ENCODE measurements at regions of chr1 and their contacts with region 1.

Region 1: DNA sequence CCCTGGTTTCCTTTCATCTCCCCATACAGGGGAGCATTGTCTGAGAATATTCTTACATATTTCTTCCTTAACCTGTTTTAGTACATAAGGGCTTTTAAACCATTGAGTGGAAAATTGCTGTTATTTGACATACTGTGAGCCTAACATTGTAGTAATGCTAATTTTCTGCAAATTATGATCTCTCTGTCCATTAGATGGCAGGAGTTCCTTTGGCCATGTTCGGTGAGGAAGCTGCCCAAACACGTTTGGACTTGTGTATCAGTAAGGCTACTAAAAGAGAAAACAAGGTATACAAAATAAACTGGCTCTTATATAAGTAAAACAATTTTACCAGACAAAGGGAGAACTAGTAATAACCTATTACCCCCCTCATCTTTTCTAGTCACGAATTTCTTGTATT is 29.2 kb downstream of the CDC7 start:
- DNase-seq: no peak
- H3K4me3 Mint-ChIP-seq: no peak overlapping the region
- H3K27ac Mint-ChIP-seq: no peak overlapping the region
- H3K4me1 Mint-ChIP-seq: peaks cover 27% of the 10 kb centered on the region
- H3K27me3 Mint-ChIP-seq: no peaks in the 10 kb centered on the region

Region 2: GRCh38 chr1:91148641-91149069 is 381.2 kb before region 1 on chr1:
- intact Hi-C with region 1: no loop called
- DNase-seq: no peak
- H3K4me3 Mint-ChIP-seq: no peak overlapping the region
- H3K27ac Mint-ChIP-seq: no peak overlapping the region
- H3K4me1 Mint-ChIP-seq: no peaks in the 10 kb centered on the region
- H3K27me3 Mint-ChIP-seq: peaks cover 20% of the 10 kb centered on the region

Region 3: DNA sequence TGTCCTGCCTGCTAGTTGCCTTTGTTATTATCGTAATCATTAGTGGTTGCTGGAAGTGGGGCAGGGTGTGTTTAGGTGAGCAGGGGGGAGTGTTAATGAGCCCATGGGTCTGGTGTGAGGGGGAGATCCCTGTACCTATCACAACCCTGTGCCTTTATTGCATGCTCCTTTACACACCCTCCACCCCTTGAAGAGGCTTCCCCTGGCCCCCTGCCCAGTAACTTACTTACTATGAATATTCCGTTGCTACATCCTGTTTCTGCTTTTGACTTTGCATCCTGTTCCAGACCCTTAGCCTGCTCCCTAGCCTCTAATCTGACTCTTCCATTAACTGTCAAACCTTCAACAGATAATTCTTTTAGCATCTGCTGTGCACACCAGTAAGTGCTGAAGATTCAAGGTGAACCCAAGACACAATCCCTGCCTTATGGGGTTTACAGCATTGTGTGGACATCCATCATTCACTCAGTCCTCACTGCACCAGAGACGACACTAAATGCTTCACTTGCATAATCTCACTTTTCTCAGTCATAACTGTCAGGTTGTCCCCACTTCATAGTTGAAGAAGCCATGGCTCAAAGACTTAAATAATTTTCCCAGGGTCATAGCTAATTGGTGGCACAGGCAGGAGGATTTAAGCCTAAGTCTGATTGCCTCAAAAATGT is 18.7 kb after region 1 on chr1:
- intact Hi-C with region 1: loop called (anchors 2 kb)
- DNase-seq: no peak
- H3K4me3 Mint-ChIP-seq: peak overlapping the region; percentile 43
- H3K27ac Mint-ChIP-seq: peak overlapping the region; percentile 80
- H3K4me1 Mint-ChIP-seq: peaks cover 68% of the 10 kb centered on the region
- H3K27me3 Mint-ChIP-seq: peaks cover 4% of the 10 kb centered on the region

Region 4: DNA sequence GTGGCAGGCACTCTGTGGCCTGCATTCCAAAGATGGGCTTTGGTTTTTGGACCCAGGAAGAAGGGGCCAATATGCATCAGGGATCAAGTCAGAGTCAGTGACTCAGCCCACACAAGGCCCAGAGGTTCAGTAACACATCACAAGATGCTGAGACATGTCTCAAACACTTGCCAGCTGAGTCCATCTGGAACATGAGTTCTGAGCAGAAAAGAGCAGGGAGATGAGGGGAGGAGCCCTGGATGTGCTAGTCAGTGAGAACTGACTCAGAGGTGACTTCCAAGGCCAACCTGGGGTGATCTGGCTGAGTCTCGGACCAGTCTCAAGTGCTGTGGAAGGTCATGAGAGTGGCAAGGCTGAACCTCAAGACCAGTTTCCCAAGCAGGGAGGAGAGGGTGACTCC is 120.9 kb after region 1 on chr1:
- intact Hi-C with region 1: no loop called
- DNase-seq: no peak
- H3K4me3 Mint-ChIP-seq: no peak overlapping the region
- H3K27ac Mint-ChIP-seq: no peak overlapping the region
- H3K4me1 Mint-ChIP-seq: peaks cover 19% of the 10 kb centered on the region
- H3K27me3 Mint-ChIP-seq: no peaks in the 10 kb centered on the region